Activated CD8-positive, alpha-beta T cell treated with anti-CD3 and anti-CD28 coated beads for 36 hours (primary cell): ENCODE measurements at regions of chr15 and their contacts with region 1.

Region 1: GRCh38 chr15:85582131-85583079 is 202.0 kb downstream of the AKAP13 start:
- DNase-seq: peak; percentile 78
- ATAC-seq: peak; percentile 69
- H3K4me3 Mint-ChIP-seq: peak overlapping the region; percentile 83
- H3K27ac Mint-ChIP-seq: peak overlapping the region; percentile 94
- H3K4me1 Mint-ChIP-seq: peaks cover 80% of the 10 kb centered on the region
- H3K27me3 Mint-ChIP-seq: no peaks in the 10 kb centered on the region
- CTCF ChIP-seq: no peak

Region 2: DNA sequence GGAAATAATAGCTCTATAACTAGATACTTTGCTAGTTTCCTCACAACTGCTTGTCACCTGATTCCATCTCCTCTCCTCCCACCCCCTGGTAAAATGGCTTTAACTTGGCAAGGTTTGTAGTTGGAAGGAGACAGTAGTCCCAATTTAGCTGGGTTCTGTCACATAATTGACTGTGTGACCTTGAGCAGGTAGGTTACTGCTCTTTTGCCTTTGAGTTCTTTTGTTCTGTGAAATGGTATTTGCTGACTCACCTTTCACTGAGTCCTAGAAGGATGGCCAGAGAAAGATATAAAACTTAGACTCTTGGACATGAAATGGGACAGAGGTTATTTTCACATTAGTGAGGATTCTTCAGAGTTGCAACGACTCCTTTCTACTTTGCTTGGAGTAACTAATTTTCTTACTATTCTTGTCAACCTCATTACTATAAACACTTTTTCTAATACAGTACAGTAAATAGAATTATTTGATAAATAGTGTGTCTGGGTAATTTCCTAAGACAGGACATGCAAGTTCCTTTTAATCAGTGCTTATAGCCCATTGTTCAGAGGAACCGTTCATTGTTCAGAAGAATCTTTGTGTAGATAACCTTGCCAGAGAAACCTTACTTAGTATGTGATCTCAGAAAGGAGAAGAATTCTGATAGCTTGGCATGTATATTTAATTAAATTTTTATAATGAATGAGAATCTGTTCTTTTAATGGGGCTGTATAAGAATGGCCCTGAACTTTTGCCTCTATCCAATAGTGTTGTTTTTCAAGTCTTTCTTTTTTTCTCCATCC is 187.7 kb before region 1 on chr15:
- CTCF ChIA-PET with region 1: no interaction called
- POLR2A ChIA-PET with region 1: no interaction called
- intact Hi-C with region 1: no loop called
- DNase-seq: no peak
- ATAC-seq: no peak
- H3K4me3 Mint-ChIP-seq: no peak overlapping the region
- H3K27ac Mint-ChIP-seq: no peak overlapping the region
- H3K4me1 Mint-ChIP-seq: peaks cover 44% of the 10 kb centered on the region
- H3K27me3 Mint-ChIP-seq: no peaks in the 10 kb centered on the region
- CTCF ChIP-seq: no peak

Region 3: DNA sequence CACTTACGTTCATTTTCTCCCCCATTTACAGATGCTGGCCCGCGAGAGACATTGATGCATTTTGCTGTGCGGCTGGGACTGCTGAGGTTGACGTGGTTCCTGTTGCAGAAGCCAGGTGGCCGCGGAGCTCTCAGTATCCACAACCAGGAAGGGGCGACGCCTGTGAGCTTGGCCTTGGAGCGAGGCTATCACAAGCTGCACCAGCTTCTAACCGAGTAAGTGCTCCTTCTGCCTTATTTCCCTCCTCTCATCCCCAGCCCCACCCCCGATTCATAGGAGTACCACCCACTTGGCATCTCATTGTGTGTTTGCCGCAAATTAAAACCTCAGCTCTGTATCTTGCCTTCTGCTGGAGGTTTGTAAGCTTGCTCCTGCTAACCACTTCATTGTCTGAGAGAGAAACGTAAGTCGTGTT is 38.7 kb before region 1 on chr15:
- CTCF ChIA-PET with region 1: interaction called, 8 read pairs
- POLR2A ChIA-PET with region 1: interaction called, 16 read pairs
- intact Hi-C with region 1: loop called (anchors 2 kb)
- DNase-seq: peak; percentile 75
- ATAC-seq: peak; percentile 35
- H3K4me3 Mint-ChIP-seq: peak overlapping the region; percentile 61
- H3K27ac Mint-ChIP-seq: peak overlapping the region; percentile 74
- H3K4me1 Mint-ChIP-seq: peaks cover 82% of the 10 kb centered on the region
- H3K27me3 Mint-ChIP-seq: no peaks in the 10 kb centered on the region
- CTCF ChIP-seq: no peak

Region 4: DNA sequence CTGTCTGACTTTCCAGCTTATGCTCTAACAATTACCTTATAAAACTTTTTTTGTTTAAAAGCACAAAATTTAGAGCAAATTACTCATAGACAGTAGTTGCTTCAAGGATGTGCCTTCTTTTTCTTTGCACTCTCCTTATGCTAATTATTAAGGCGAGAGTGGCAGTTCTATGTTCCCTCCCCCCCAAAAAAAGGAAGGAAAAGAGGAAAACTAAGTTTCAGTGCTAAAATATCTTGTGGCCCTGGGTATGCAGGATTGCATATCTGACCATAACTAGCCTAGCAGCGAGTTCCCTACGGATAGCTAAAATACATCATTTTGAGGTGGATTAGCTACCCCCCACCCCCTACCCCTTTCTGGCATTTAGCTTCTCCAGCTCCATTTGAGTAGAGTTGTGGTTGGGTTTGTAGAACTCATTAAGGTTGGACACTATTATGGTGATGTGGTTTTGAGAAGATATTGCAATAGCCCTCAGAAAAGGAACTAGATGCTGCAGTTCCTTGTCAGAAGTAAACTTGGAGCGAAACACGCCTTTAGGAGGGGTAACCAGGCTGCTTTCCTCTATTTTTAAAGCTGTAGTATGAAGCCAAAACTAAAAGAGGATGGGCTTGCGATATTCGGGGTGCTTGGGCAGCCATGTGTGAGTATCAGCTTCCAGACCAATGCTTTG is 27.4 kb before region 1 on chr15:
- CTCF ChIA-PET with region 1: interaction called, 12 read pairs
- POLR2A ChIA-PET with region 1: interaction called, 18 read pairs
- intact Hi-C with region 1: no loop called
- DNase-seq: no peak
- ATAC-seq: peak; percentile 17
- H3K4me3 Mint-ChIP-seq: peak overlapping the region; percentile 39
- H3K27ac Mint-ChIP-seq: peak overlapping the region; percentile 80
- H3K4me1 Mint-ChIP-seq: peaks cover 68% of the 10 kb centered on the region
- H3K27me3 Mint-ChIP-seq: no peaks in the 10 kb centered on the region
- CTCF ChIP-seq: no peak

Region 5: GRCh38 chr15:85618956-85619491 is 36.6 kb after region 1 on chr15:
- CTCF ChIA-PET with region 1: interaction called, 10 read pairs
- POLR2A ChIA-PET with region 1: interaction called, 5 read pairs
- intact Hi-C with region 1: no loop called
- DNase-seq: peak; percentile 76
- ATAC-seq: peak; percentile 94
- H3K4me3 Mint-ChIP-seq: no peak overlapping the region
- H3K27ac Mint-ChIP-seq: no peak overlapping the region
- H3K4me1 Mint-ChIP-seq: peaks cover 25% of the 10 kb centered on the region
- H3K27me3 Mint-ChIP-seq: no peaks in the 10 kb centered on the region
- CTCF ChIP-seq: no peak